K562 (cell line): ENCODE measurements at regions of chr17 and their contacts with region 1.

Region 1: GRCh38 chr17:40399185-40399584 is 18.5 kb downstream of the TOP2A start:
- DNase-seq: peak; percentile 26 to 66 (median 38)
- ATAC-seq: peak; percentile 84
- H3K4me3 ChIP-seq: no peak overlapping the region
- H3K27ac ChIP-seq: no peak overlapping the region
- H3K4me1 ChIP-seq: no peaks in the 10 kb centered on the region
- H3K27me3 ChIP-seq: no peaks in the 10 kb centered on the region
- CTCF ChIP-seq: peak; percentile 32 to 58 (median 50); a peak in 5 of 6 replicates
- EP300 ChIP-seq: no peak
- POLR2A ChIP-seq: no peak
- RAD21 ChIP-seq: peak; percentile 38 to 52

Region 2: GRCh38 chr17:40251576-40251975 is 147.6 kb before region 1 on chr17:
- CTCF ChIA-PET with region 1: no interaction called
- POLR2A ChIA-PET with region 1: no interaction called
- in situ Hi-C with region 1: no loop called
- intact Hi-C with region 1: no loop called
- DNase-seq: peak in 3 of 4 experiments; percentile 30 to 38 (median 32)
- ATAC-seq: peak; percentile 32; the same call in 1 of the 3 replicates
- H3K4me3 ChIP-seq: no peak overlapping the region
- H3K27ac ChIP-seq: no peak overlapping the region
- H3K4me1 ChIP-seq: peaks cover 4 to 7% of the 10 kb centered on the region in 2 experiments; a peak in 2 of 5 replicates
- H3K27me3 ChIP-seq: no peaks in the 10 kb centered on the region
- CTCF ChIP-seq: no peak
- EP300 ChIP-seq: no peak
- POLR2A ChIP-seq: no peak
- RAD21 ChIP-seq: no peak

Region 3: DNA sequence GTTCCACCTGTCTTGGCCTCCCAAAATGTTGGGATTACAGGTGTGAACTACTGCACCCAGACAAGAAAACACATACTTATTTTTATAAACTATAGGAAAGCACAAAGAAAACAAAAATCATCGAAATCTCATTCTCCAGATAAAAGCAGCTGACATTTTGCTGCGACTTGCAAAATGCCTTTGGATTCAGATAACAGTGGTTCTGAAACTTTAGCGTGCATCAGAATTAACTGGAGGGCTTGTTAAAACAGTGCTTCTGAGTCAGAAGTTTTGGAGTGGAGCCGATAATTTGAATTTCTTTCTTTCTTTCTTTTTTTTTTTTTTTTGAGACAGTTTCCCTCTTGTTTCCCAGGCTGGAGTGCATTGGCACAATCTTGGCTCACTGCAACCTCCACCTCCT is 16.9 kb before region 1 on chr17:
- CTCF ChIA-PET with region 1: no interaction called
- POLR2A ChIA-PET with region 1: interaction called, 13 read pairs
- in situ Hi-C with region 1: no loop called
- intact Hi-C with region 1: no loop called
- DNase-seq: no peak
- ATAC-seq: no peak
- H3K4me3 ChIP-seq: no peak overlapping the region
- H3K27ac ChIP-seq: no peak overlapping the region
- H3K4me1 ChIP-seq: peaks cover 7 to 8% of the 10 kb centered on the region in 2 experiments; a peak in 3 of 5 replicates
- H3K27me3 ChIP-seq: no peaks in the 10 kb centered on the region
- CTCF ChIP-seq: no peak
- EP300 ChIP-seq: no peak
- POLR2A ChIP-seq: no peak
- RAD21 ChIP-seq: no peak

Region 4: GRCh38 chr17:40417609-40418427 is 18.6 kb after region 1 on chr17 and contains the start of gene TOP2A:
- CTCF ChIA-PET with region 1: no interaction called
- POLR2A ChIA-PET with region 1: interaction called, 14 read pairs
- in situ Hi-C with region 1: no loop called
- intact Hi-C with region 1: no loop called
- DNase-seq: peak; percentile 100
- ATAC-seq: peak; percentile 94
- H3K4me3 ChIP-seq: peak within 1 kb of the TSS; percentile 74
- H3K27ac ChIP-seq: peak within 1 kb of the TSS; percentile 92
- H3K4me1 ChIP-seq: peaks cover 7 to 15% of the 10 kb centered on the region in 2 experiments
- H3K27me3 ChIP-seq: no peaks in the 10 kb centered on the region
- CTCF ChIP-seq: no peak
- EP300 ChIP-seq: 0 out of 2 replicates have a peak, but pooled peaks have one; percentile 23
- POLR2A ChIP-seq: peak; percentile 95
- RAD21 ChIP-seq: no peak
- polyA plus RNA-seq, gene TOP2A: 175 to 259 TPM

Region 5: GRCh38 chr17:40559954-40560591 is 160.9 kb after region 1 on chr17:
- CTCF ChIA-PET with region 1: interaction called, 20 read pairs
- POLR2A ChIA-PET with region 1: interaction called, 4 read pairs
- in situ Hi-C with region 1: no loop called
- intact Hi-C with region 1: no loop called
- DNase-seq: peak; percentile 91 to 94 (median 92)
- ATAC-seq: peak; percentile 89
- H3K4me3 ChIP-seq: peak overlapping the region; percentile 26
- H3K27ac ChIP-seq: peak overlapping the region; percentile 30; the same call in 2 of the 3 replicates
- H3K4me1 ChIP-seq: peaks cover 29 to 36% of the 10 kb centered on the region in 2 experiments
- H3K27me3 ChIP-seq: peaks cover 5 to 16% of the 10 kb centered on the region in 2 experiments; a peak in 2 of 5 replicates
- CTCF ChIP-seq: peak; percentile 95 to 99 (median 98)
- EP300 ChIP-seq: peak; percentile 33; the same call in 1 of the 2 replicates
- POLR2A ChIP-seq: no peak
- RAD21 ChIP-seq: peak; percentile 88 to 97